Heart right ventricle (tissue), 16 donors: ENCODE measurements at regions of chr12 and their contacts with region 1.

Region 1: GRCh38 chr12:94101738-94102660 is 46.4 kb upstream of the PLXNC1 start:
- DNase-seq: peak; percentile 78 to 88
- ATAC-seq: peak; percentile 83 to 94 (median 90)
- H3K4me3 ChIP-seq: peak overlapping the region; percentile 16 to 90 (median 66)
- H3K27ac ChIP-seq: peak overlapping the region in 8 of 10 donors; percentile 2 to 80 (median 68)
- H3K4me1 ChIP-seq: peaks cover 0 to 26% (median 12%) of the 10 kb centered on the region in 9 donors
- H3K27me3 ChIP-seq: peaks cover 0 to 21% (median 0%) of the 10 kb centered on the region in 7 donors
- CTCF ChIP-seq: peak; percentile 61 to 94 (median 86)

Region 2: GRCh38 chr12:93502802-93503623 is 599.0 kb before region 1 on chr12:
- intact Hi-C with region 1: loop called (anchors 2 to 5 kb)
- DNase-seq: peak in 1 of 2 donors; percentile 46
- ATAC-seq: no peak
- H3K4me3 ChIP-seq: no peak overlapping the region
- H3K27ac ChIP-seq: no peak overlapping the region
- H3K4me1 ChIP-seq: peaks cover 0 to 6% (median 0%) of the 10 kb centered on the region in 9 donors
- H3K27me3 ChIP-seq: no peaks in the 10 kb centered on the region
- CTCF ChIP-seq: peak; percentile 67 to 89 (median 82)

Region 3: DNA sequence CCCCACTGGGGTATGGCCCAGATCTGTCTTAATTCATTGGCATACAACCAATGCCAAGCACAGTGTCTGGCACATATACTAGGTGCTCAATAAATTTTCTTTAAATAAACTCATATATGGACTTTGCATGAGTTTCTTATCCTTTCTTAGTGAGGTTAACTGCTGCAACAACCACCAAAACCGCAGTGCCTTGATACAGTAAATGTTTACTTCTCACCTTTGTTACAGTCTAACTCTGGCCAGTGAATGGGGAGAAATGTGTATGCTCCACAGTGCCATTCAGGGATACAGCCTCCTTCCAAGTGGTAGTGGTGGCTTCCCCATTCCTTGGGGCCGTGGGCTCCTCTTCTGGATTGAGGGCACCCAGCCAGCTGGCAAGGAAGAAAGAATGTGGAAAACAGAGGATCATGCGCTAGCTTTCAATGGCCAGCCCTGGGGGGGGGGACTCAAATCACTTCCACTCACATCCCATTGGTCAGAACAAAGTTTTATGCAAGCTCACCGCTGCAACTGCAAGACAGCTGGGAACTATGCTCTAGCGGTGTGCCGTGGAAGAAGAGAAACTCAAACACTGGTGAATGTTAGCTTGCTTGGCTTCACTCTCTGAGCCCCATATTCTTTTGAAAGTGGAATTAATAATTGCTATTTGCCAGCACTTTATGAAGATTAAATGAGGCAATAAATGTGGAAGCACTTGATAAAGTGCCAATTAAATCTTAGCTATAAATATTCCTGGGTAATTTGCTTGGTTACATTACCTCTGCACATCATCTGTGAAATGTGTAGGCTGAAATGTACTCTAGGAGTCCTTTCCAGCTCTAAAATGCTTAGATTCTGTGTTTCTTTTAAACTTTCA is 580.5 kb before region 1 on chr12:
- intact Hi-C with region 1: loop called in 1 of 10 experiments (anchors 5 kb)
- DNase-seq: peak in 1 of 2 donors; percentile 22
- ATAC-seq: peak in 1 of 8 donors; percentile 57
- H3K4me3 ChIP-seq: no peak overlapping the region
- H3K27ac ChIP-seq: no peak overlapping the region
- H3K4me1 ChIP-seq: peaks cover 0 to 24% (median 0%) of the 10 kb centered on the region in 9 donors
- H3K27me3 ChIP-seq: no peaks in the 10 kb centered on the region
- CTCF ChIP-seq: no peak

Region 4: DNA sequence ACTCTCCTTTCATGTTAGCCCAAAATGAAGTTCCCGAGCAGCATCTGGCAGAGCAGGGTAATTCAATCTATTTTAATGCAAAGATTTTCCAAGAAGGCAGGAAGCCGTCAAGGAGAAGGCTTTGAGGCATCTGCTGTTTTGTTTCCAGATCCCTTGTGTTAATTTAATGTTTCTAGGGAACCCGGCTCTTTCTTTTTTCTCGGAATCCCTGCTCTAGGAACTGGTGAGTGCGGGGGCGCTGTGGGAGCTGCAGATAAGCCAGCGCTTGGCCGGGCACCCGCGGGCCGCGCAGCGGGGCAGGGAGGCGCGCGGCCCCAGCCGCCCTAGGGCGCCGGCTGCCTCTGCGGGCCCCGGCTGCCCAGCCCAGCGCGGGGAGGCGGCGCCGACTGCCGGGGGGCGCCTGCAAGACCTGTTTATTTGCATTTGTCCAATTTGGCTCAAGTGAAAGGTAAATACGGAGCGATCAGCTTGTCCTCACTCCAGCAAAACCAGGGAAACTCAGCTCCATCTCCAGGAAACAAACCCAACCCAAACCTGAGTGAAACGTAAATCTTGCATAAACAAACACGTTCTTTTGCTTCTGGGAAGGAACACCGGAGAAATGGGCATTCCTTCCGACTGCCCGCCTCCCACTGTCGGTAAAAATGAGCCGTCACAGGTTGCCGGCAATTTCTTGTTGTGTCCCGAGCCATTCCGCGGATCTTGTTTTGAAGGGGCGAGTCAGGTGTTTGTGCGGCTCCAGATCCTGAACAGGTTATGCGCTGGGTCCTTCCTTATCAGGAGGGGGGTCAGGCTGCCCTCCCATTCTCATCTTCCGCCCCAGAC is 359.7 kb before region 1 on chr12:
- intact Hi-C with region 1: loop called in 2 of 10 experiments (anchors 5 kb)
- DNase-seq: peak; percentile 75 to 80
- ATAC-seq: peak; percentile 88 to 96 (median 90)
- H3K4me3 ChIP-seq: peak overlapping the region; percentile 16 to 68 (median 64)
- H3K27ac ChIP-seq: peak overlapping the region; percentile 86 to 95 (median 91)
- H3K4me1 ChIP-seq: peaks cover 5 to 88% (median 74%) of the 10 kb centered on the region in 9 donors
- H3K27me3 ChIP-seq: no peaks in the 10 kb centered on the region
- CTCF ChIP-seq: peak in 8 of 9 donors; percentile 11 to 57 (median 44)

Region 5: DNA sequence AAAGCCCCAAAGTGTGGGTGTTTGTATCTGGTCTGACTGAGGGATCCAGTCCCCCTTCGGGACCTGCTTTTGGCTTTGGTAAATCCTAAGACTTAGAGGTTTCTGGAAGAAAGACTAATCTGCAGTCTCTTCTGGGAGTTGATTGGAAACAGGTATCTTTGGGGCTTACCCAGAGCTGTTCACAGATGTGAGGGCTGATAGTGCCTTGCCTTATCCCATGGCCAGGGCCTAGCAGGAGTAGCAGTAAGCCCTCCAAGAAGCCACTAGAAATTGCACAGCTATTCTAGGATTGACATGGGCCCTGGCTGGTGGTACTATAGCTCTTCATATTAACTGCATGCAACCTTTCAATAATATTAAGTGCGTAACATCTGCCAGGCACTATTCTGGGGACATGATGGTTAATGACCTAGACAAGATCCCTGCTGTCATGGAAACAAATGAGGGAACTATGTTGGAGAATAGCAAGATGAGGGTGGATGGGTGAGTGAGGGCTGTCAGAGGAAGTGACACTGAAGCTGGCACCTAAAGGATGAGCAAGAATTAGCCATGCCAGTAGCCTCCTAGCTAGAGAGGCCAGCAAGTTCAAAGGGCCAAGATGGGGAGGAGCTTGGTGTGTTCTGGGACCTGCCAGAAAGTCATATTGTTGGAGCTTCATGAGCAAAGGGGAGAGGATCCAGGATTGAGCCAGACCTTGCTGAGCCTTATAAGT is 353.2 kb before region 1 on chr12:
- intact Hi-C with region 1: loop called in 2 of 10 experiments (anchors 5 kb)
- DNase-seq: no peak
- ATAC-seq: peak in 1 of 8 donors; percentile 23
- H3K4me3 ChIP-seq: no peak overlapping the region
- H3K27ac ChIP-seq: peak overlapping the region in 1 of 10 donors; percentile 42
- H3K4me1 ChIP-seq: peaks cover 8 to 74% (median 47%) of the 10 kb centered on the region in 9 donors
- H3K27me3 ChIP-seq: no peaks in the 10 kb centered on the region
- CTCF ChIP-seq: no peak

Region 6: DNA sequence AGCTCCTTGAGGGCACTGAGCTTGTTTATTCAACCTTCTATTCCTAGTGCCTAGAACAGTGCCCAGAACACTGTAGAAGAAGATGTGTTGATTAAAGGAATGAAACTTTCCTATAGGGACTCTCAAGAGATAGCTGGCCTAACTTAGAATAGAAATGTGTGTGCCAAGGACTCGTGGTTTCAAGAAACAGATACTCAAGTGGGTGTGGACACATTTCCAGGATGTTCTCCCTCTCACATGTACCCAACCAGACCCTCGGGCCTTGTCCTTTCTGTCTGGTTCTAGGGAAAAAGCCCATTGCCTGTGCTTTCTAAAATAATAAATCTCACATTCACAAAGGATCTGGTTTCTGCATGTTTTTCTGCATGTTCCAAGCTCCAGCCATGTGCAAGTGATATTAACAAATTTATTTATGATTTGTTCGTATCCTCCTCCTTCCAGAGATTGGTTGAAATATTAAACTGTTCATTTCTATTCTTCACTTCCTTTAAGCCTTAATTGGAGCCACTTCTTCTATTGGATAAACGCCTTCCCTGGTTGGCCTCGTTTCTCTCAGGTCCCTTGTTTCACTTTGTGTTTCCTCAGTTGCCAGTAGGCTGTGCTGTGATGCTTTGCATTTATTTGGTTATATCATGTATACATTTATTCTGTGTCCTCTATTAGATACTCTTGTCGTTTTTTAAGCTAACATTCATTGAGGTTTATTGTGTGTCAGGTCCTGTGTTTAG is 335.0 kb before region 1 on chr12:
- intact Hi-C with region 1: loop called (anchors 1 to 10 kb)
- DNase-seq: peak in 1 of 2 donors; percentile 69
- ATAC-seq: peak; percentile 71 to 91 (median 87)
- H3K4me3 ChIP-seq: no peak overlapping the region
- H3K27ac ChIP-seq: peak overlapping the region; percentile 5 to 77 (median 63)
- H3K4me1 ChIP-seq: peaks cover 7 to 69% (median 41%) of the 10 kb centered on the region in 9 donors
- H3K27me3 ChIP-seq: no peaks in the 10 kb centered on the region
- CTCF ChIP-seq: peak; percentile 30 to 83 (median 68)

Region 7: DNA sequence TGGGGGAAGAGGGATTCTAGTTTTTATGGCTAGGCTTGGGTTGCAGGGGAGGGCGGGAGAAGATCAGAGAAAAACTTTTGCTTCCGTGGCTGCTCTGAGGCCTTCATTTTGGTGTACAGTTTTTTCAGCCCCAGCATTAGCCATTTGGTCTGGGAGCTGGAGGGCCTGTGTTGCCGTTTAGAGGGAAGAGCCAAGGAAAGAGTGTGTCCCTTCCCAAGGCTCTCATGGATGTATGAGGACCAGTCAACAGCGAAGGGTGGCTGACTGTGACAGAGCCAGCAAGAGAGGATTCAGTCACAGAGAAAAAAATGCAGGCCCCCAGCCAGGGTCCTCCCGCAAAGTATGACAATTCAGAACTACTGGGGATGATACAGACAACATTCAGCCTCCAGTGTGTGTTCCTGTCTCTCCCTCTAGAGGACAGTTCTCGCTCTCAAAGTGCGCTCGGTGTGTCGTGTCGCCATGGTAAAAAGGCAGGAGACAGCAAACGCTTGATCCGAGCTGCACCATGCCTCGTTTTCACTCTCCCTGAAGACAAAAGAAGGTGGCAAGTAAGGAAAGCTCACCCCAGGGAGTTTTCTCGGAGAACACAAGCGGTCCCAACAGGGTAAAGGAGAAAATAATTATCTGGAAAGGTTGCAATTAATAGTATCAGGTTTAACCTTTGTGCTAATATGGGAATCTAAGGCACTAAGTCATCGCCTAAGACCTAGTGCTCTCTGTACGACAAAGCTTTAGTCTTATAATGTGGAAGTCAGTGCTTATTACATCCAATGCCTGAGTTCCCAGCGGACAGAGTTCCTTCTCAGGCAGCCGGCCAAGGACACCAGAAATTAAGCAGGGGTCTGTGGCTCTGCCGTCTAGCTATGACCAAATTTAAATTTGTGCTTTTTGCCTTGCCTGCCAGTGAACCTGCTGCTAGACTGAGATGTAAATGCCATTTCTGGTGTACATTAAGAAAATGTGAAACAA is 110.9 kb before region 1 on chr12:
- intact Hi-C with region 1: loop called in 4 of 10 experiments (anchors 5 to 10 kb)
- DNase-seq: peak; percentile 41 to 68
- ATAC-seq: peak; percentile 60 to 97 (median 94)
- H3K4me3 ChIP-seq: peak overlapping the region in 6 of 10 donors; percentile 22 to 33 (median 28)
- H3K27ac ChIP-seq: peak overlapping the region in 9 of 10 donors; percentile 27 to 72 (median 51)
- H3K4me1 ChIP-seq: peaks cover 0 to 23% (median 12%) of the 10 kb centered on the region in 9 donors
- H3K27me3 ChIP-seq: no peaks in the 10 kb centered on the region
- CTCF ChIP-seq: peak; percentile 19 to 74 (median 49)

Region 8: DNA sequence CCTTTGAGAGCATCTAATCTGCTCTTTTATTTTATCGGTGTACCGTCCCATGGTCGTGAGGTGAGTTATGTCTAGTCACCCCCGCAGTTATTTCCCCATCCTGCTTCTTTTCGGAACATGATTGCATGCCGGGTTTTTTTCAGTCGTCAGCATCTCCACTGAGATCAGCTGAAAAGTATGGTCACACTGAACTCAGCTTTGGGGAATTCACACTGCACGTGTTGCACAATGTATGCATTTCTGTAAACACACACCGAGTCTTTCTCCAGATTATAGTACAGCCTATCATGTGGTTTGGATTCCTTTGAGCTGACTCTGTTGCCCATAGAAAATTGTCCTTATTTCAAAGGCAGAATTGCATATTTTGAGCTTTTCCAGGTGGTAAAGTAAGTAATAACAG is 71.0 kb after region 1 on chr12:
- intact Hi-C with region 1: no loop called
- DNase-seq: no peak
- ATAC-seq: peak in 5 of 8 donors; percentile 37 to 54 (median 47)
- H3K4me3 ChIP-seq: peak overlapping the region in 1 of 10 donors; percentile 1
- H3K27ac ChIP-seq: peak overlapping the region in 1 of 10 donors; percentile 89
- H3K4me1 ChIP-seq: peaks cover 0 to 70% (median 4%) of the 10 kb centered on the region in 9 donors
- H3K27me3 ChIP-seq: no peaks in the 10 kb centered on the region
- CTCF ChIP-seq: no peak